Heart right ventricle (tissue), 16 donors: ENCODE measurements at regions of chr18 and their contacts with region 1.

Region 1: DNA sequence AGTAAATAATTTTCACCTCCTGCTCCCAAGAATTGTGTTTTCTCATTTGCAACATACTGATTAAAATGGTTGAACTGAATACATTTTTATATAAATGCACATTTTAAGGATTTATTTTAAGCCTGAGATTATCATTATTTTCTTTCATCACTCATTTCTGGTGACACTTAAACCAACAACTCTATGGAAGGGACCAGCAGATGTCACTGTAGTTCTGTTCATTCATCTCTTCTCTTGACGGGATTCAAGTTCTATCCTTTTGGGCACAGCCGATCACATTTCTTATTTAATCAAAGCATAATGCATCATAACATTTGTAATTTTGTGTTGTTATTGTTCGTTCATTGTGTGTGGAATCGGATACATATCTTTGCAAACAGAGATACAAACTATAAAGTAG is 417.9 kb downstream of the HRH4 start:
- DNase-seq: peak in 1 of 2 donors; percentile 39
- ATAC-seq: peak in 7 of 8 donors; percentile 59 to 77 (median 63)
- H3K4me3 ChIP-seq: no peak overlapping the region
- H3K27ac ChIP-seq: no peak overlapping the region
- H3K4me1 ChIP-seq: peaks cover 0 to 10% (median 0%) of the 10 kb centered on the region in 9 donors
- H3K27me3 ChIP-seq: peaks cover 0 to 3% (median 0%) of the 10 kb centered on the region in 7 donors
- CTCF ChIP-seq: peak; percentile 26 to 84 (median 65)

Region 2: GRCh38 chr18:24817587-24818371 is 60.5 kb before region 1 on chr18:
- intact Hi-C with region 1: no loop called
- DNase-seq: no peak
- ATAC-seq: no peak
- H3K4me3 ChIP-seq: no peak overlapping the region
- H3K27ac ChIP-seq: no peak overlapping the region
- H3K4me1 ChIP-seq: no peaks in the 10 kb centered on the region
- H3K27me3 ChIP-seq: peaks cover 0 to 12% (median 4%) of the 10 kb centered on the region in 7 donors
- CTCF ChIP-seq: no peak

Region 3: DNA sequence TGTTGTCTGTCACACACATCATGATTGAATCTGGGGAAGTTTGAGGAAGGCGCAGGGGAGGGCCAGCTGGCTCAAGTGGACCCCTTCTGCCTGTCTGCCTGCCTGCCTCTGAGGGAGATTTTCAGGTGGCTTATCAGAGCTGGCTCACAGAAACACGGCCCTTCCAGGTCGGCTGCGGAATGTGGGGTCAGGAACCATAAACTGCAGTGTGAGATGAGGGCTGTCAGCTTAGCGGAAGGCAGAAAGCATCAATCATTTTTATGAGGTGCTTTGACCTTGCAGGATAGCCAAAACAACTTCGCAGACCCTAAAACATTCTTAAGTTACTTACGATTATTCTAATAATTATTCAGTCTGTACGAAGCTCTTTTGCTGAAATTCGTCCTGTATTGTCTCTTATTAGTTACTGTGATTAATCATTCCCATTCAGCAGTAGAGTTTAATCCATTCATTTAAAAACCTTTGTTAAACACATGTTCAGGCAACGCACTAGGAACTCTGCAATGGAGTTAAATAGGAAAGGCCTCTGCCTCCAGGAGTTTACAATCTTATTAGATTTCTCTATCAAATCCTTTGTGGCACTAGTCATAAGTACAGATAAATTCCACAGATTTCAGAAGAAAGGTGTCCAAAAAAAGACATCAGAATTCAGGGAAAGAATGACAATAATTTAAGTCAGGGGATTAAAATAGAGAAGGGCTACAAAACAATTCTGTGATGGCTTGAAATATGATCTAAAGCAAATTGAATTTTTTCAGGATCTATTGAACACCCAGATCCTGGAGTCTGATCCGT is 46.2 kb before region 1 on chr18:
- intact Hi-C with region 1: no loop called
- DNase-seq: no peak
- ATAC-seq: no peak
- H3K4me3 ChIP-seq: no peak overlapping the region
- H3K27ac ChIP-seq: no peak overlapping the region
- H3K4me1 ChIP-seq: no peaks in the 10 kb centered on the region
- H3K27me3 ChIP-seq: peaks cover 0 to 18% (median 0%) of the 10 kb centered on the region in 7 donors
- CTCF ChIP-seq: no peak

Region 4: GRCh38 chr18:24987303-24988252 is 109.3 kb after region 1 on chr18:
- intact Hi-C with region 1: loop called in 1 of 10 experiments (anchors 10 kb)
- DNase-seq: peak; percentile 28 to 44
- ATAC-seq: peak; percentile 69 to 85 (median 76)
- H3K4me3 ChIP-seq: peak overlapping the region in 5 of 10 donors; percentile 13 to 32 (median 23)
- H3K27ac ChIP-seq: peak overlapping the region in 9 of 10 donors; percentile 2 to 73 (median 45)
- H3K4me1 ChIP-seq: peaks cover 3 to 33% (median 15%) of the 10 kb centered on the region in 9 donors
- H3K27me3 ChIP-seq: no peaks in the 10 kb centered on the region
- CTCF ChIP-seq: no peak

Region 5: DNA sequence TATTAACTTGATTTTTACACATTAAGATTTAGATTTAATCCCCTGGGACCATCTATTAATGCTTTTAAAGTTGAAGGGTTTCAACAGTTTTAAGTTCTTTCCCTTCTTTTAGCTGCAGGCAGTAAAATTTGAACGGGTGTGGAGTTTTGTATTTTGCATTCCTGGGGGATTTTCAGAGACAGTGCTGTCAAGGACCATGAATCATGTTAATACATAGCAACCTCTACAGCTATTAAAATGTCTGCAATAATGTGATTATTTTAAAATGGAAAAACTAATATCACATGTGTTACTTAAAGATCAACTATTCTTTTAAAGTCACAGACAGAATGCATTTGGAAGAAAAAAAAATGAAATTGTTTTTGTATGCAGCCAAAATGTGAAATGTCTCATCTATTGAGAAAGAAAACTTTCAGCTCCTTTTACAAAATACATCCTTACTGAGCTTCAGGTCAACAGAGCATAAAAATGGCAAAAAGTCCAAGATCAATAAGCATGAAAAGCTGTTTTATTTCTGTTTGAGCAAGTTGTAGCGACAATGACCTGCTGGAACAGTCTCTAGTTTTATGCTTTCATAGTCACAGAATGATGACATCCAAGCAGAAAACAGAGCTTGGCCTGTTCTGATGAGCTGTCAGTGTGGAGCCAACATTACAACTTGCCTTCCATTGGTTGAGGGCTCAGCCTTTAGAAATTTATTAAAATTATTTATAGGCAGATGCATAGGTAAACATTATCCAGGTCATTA is 495.3 kb after region 1 on chr18:
- intact Hi-C with region 1: loop called in 1 of 10 experiments (anchors 10 kb)
- DNase-seq: no peak
- ATAC-seq: no peak
- H3K4me3 ChIP-seq: no peak overlapping the region
- H3K27ac ChIP-seq: no peak overlapping the region
- H3K4me1 ChIP-seq: no peaks in the 10 kb centered on the region
- H3K27me3 ChIP-seq: peaks cover 0 to 5% (median 0%) of the 10 kb centered on the region in 7 donors
- CTCF ChIP-seq: no peak

Region 6: DNA sequence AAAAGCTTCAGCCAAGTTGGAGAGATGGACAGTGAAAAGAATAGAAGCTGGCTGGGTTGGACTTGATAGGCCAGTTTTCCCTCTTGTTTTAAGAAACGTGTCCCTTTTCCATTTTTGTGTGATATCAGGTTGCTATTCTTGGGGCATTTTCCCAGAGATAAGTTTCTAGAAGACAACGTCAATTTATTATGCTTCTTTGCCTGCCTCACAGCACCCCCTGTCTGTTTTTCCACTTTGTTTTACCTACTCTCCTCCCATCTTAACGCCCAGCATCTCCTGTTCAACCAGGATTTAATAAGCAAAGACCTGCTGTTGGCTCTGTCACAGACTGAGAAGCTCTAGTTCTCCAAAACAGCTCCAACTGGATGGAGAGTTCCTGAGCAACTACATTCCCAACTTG is 791.5 kb after region 1 on chr18:
- intact Hi-C with region 1: loop called in 8 of 10 experiments (anchors 5 to 10 kb)
- DNase-seq: no peak
- ATAC-seq: no peak
- H3K4me3 ChIP-seq: no peak overlapping the region
- H3K27ac ChIP-seq: no peak overlapping the region
- H3K4me1 ChIP-seq: no peaks in the 10 kb centered on the region
- H3K27me3 ChIP-seq: peaks cover 0 to 2% (median 0%) of the 10 kb centered on the region in 7 donors
- CTCF ChIP-seq: peak in 1 of 9 donors; percentile 29

Region 7: GRCh38 chr18:25832001-25832604 is 953.8 kb after region 1 on chr18:
- intact Hi-C with region 1: loop called in 9 of 10 experiments (anchors 2 to 10 kb)
- DNase-seq: peak; percentile 59 to 67
- ATAC-seq: peak; percentile 80 to 93 (median 89)
- H3K4me3 ChIP-seq: no peak overlapping the region
- H3K27ac ChIP-seq: no peak overlapping the region
- H3K4me1 ChIP-seq: peaks cover 0 to 18% (median 6%) of the 10 kb centered on the region in 9 donors
- H3K27me3 ChIP-seq: no peaks in the 10 kb centered on the region
- CTCF ChIP-seq: peak; percentile 57 to 83 (median 78)

Region 8: GRCh38 chr18:25896178-25896780 is 1018.0 kb after region 1 on chr18:
- intact Hi-C with region 1: loop called in 8 of 10 experiments (anchors 5 to 10 kb)
- DNase-seq: peak in 1 of 2 donors; percentile 9
- ATAC-seq: no peak
- H3K4me3 ChIP-seq: no peak overlapping the region
- H3K27ac ChIP-seq: no peak overlapping the region
- H3K4me1 ChIP-seq: no peaks in the 10 kb centered on the region
- H3K27me3 ChIP-seq: peaks cover 0 to 5% (median 0%) of the 10 kb centered on the region in 7 donors
- CTCF ChIP-seq: peak; percentile 61 to 80 (median 75)